ENCODE measurements at regions of chr10 and their contacts with region 1.

Region 1: DNA sequence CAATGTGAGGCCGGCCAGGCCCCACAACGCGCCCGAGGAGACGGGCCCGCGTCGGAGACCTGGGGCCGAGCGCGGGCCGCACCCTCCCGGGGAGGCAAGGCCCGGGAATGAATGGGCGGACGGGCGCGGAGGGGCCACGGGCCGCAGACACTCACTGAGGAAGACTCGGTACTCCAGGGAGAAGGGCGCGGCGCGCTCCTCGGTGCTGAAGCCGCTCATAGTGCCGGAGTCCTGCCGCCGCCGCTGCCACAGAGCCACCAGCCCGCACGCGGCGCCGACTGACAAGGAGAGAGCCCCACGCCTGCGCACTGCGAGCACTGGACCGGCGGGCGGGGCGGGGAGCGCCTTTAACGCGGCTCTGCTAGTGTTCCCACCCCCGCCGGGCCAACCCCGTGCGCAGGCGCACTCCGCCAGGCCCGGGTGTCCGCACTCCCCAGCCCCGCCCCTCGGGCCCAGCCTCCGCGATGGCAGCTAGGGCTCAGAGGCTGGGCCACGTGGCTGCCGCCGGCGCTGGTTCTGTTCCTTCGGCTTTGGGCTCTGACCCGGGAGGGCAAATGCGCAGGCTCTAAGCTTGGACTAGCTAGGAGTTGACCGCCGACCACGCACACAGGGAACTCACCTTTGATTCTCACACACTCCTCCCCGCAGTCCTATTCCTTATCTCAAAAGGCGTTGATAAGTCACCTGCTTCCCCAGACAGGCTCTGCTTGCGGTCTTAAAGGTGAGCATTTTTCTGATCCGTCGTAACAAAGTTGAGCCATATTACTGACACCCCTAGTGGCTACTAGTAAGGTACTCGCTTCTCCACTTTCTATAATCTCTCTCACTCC is at the start of gene PPA1:
- DNase-seq: peak; percentile 99
- ATAC-seq: peak; percentile 96
- H3K4me3 Mint-ChIP-seq: peak within 1 kb of the TSS; percentile 88
- H3K27ac Mint-ChIP-seq: peak within 1 kb of the TSS; percentile 89
- H3K4me1 Mint-ChIP-seq: peaks cover 44% of the 10 kb centered on the region
- H3K27me3 Mint-ChIP-seq: no peaks in the 10 kb centered on the region
- total RNA-seq, gene PPA1: 157 to 192 TPM

Region 2: GRCh38 chr10:70348228-70348850 is 115.0 kb after region 1 on chr10:
- CTCF ChIA-PET with region 1: interaction called, 512 read pairs
- DNase-seq: peak; percentile 64
- ATAC-seq: peak; percentile 77
- H3K4me3 Mint-ChIP-seq: no peak overlapping the region
- H3K27ac Mint-ChIP-seq: no peak overlapping the region
- H3K4me1 Mint-ChIP-seq: peaks cover 8% of the 10 kb centered on the region
- H3K27me3 Mint-ChIP-seq: no peaks in the 10 kb centered on the region

Measured in activated CD8-positive, alpha-beta memory T cell treated with anti-CD3 and anti-CD28 coated beads, Interleukin-2, amount 10 ng/mL, durations not matched to agents 7 days and 5 days (primary cell).